H1 (cell line): ENCODE measurements at regions of chr19 and their contacts with region 1.

Region 1: GRCh38 chr19:41934849-41935374 is 6.7 kb upstream of the ERFL start:
- DNase-seq: peak; percentile 62 to 97
- H3K4me3 ChIP-seq: no peak overlapping the region
- H3K27ac ChIP-seq: no peak overlapping the region
- H3K4me1 ChIP-seq: peaks cover 0 to 13% (median 8%) of the 10 kb centered on the region in 4 experiments; a peak in 6 of 7 replicates
- H3K27me3 ChIP-seq: peaks cover 37 to 82% (median 75%) of the 10 kb centered on the region in 4 experiments
- CTCF ChIP-seq: peak; percentile 90 to 96 (median 93)
- EP300 ChIP-seq: peak in 1 of 2 experiments; percentile 28; a peak in 1 of 3 replicates
- POLR2A ChIP-seq: no peak
- RAD21 ChIP-seq: peak; percentile 85 to 87

Region 2: GRCh38 chr19:41859618-41860418 is 75.1 kb before region 1 on chr19 and contains the start of gene RPS19:
- CTCF ChIA-PET with region 1: interaction called, 3 read pairs
- POLR2A ChIA-PET with region 1: interaction called, 20 read pairs
- DNase-seq: peak; percentile 98 to 99
- H3K4me3 ChIP-seq: peak within 1 kb of the TSS; percentile 81 to 99 (median 96)
- H3K27ac ChIP-seq: peak within 1 kb of the TSS; percentile 95
- H3K4me1 ChIP-seq: peaks cover 3 to 26% (median 14%) of the 10 kb centered on the region in 4 experiments
- H3K27me3 ChIP-seq: no peaks in the 10 kb centered on the region
- CTCF ChIP-seq: peak; percentile 45 to 76 (median 54)
- EP300 ChIP-seq: no peak
- POLR2A ChIP-seq: peak; percentile 92 to 96
- RAD21 ChIP-seq: no peak
- total RNA-seq, gene RPS19: 2,817 and 2,831 TPM in 2 replicates

Region 3: DNA sequence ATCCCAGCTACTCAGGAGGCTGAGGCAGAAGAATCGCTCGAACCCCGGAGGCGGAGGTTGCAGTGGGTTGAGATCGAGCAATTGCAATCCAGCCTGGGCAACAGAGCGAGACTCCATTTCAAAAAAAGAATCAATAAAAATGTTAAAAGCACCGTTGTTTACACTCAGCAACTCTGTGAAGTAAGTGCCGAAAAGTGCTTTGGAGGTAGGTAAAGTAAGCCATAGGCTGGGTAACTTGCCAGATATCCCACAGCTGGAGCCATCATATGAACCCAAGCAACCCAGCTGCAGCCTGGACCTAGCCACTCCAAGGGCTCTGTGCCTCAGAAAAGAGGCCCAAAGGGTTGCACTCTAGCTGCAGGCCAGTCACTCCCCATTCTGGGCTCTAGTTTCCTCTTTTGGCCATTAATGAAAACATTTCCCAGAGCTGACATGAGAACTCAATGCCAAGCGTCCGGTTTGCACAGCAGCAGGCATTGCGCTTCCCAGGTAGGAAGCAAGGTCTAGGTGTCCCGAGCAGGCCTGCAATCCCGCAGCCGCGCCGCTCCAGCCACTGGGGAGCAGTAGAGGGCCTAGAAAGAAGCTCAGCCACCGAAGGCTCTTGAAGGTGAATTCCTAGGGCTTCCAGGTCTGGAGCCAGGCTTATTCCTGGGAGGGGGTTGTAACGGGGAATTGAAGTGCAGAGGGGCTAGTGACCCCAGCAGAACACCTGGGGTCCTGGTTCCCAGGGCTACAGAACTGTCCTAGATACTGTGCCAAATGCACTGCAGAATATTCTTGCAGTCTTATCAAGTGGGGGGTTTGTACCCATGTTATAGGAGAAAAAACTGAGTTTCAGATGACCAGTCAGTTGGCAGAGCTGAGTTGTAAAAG is 61.9 kb before region 1 on chr19:
- CTCF ChIA-PET with region 1: interaction called, 37 read pairs
- POLR2A ChIA-PET with region 1: interaction called, 71 read pairs
- DNase-seq: peak; percentile 68 to 92
- H3K4me3 ChIP-seq: no peak overlapping the region
- H3K27ac ChIP-seq: no peak overlapping the region
- H3K4me1 ChIP-seq: peaks cover 0 to 2% (median under 1%) of the 10 kb centered on the region in 4 experiments; a peak in 3 of 7 replicates
- H3K27me3 ChIP-seq: no peaks in the 10 kb centered on the region
- CTCF ChIP-seq: peak; percentile 87 to 91 (median 90)
- EP300 ChIP-seq: no peak
- POLR2A ChIP-seq: peak; percentile 77; a peak in 2 of 3 replicates
- RAD21 ChIP-seq: peak; percentile 86 to 90

Region 4: DNA sequence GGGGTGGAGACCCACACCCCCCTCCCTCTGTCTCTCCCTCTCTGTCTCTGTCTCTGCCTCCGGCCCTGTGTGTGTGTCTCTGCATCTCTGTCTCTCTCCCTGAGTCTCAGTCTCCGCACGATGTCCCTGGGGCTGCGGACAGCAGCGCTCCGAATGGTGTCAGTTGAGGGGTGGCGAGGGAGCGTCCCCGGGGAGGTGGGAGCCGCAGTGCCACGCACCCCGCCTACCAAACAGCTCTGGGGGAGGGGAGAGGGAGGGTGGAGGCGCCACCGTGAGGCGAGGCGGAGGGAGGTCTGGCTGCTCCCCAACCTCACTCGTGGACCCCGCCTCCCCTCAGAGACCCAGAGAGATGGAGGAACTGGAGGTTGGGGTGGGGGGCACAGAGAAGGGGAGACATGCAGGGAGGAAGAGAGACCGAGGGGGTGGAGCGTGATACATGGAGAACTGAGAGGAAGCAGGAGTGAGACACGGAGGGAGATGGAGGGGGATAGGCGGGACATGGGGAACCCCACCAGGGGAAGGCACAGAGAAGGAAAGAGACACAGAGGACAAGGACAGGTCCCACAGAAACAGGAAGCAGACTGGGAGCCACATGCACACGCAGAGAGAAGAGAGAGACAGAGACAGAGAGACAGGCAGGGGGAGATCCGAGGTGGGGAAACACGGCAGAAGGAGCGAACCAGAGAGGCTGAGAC is 13.9 kb before region 1 on chr19:
- CTCF ChIA-PET with region 1: interaction called, 11 read pairs
- POLR2A ChIA-PET with region 1: interaction called, 6 read pairs
- DNase-seq: no peak
- H3K4me3 ChIP-seq: peak overlapping the region in 3 of 4 experiments; percentile 3 to 19 (median 11); a peak in 3 of 8 replicates
- H3K27ac ChIP-seq: no peak overlapping the region
- H3K4me1 ChIP-seq: peaks cover 0 to 14% (median 7%) of the 10 kb centered on the region in 4 experiments; a peak in 6 of 7 replicates
- H3K27me3 ChIP-seq: peaks cover 64 to 99% (median 95%) of the 10 kb centered on the region in 4 experiments
- CTCF ChIP-seq: peak in 1 of 3 experiments; percentile 36; a peak in 1 of 4 replicates
- EP300 ChIP-seq: no peak
- POLR2A ChIP-seq: no peak
- RAD21 ChIP-seq: no peak

Region 5: DNA sequence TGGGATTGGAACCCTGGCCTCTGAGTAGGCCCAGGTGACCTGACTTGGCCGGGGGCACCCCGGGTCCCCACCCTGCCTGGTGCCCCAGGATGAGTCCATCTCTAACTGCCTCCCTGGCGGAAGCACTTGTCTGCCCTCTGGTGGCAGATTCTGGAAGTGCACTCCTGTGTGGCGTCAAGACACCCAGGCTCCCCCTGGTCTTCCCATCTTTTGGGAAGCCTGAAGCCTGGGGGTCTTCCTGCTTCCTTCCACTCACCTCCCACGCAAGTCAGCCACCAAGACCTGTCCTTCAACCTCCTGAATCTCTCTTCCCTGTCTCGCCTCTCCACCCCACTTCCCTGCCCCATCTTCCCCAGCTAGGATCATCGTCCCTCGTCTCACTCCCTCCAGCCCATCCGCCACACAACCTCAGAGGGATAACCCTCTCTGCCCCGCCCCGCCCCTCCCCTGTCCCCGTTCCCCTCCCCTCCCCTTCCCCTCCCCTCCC is 16.8 kb after region 1 on chr19:
- CTCF ChIA-PET with region 1: interaction called, 51 read pairs
- POLR2A ChIA-PET with region 1: interaction called, 4 read pairs
- DNase-seq: peak; percentile 76 to 99
- H3K4me3 ChIP-seq: peak overlapping the region in 3 of 4 experiments; percentile 32 to 52 (median 38); a peak in 6 of 8 replicates
- H3K27ac ChIP-seq: no peak overlapping the region
- H3K4me1 ChIP-seq: no peaks in the 10 kb centered on the region
- H3K27me3 ChIP-seq: no peaks in the 10 kb centered on the region
- CTCF ChIP-seq: peak; percentile 93 to 98 (median 97)
- EP300 ChIP-seq: no peak
- POLR2A ChIP-seq: no peak
- RAD21 ChIP-seq: peak; percentile 89 to 90